Activated CD4-positive, alpha-beta T cell treated with anti-CD3 and anti-CD28 coated beads, Interleukin-2, amount 10 ng/mL, durations not matched to agents 7 days and 5 days (primary cell): ENCODE measurements at regions of chr21 and their contacts with region 1.

Region 1: DNA sequence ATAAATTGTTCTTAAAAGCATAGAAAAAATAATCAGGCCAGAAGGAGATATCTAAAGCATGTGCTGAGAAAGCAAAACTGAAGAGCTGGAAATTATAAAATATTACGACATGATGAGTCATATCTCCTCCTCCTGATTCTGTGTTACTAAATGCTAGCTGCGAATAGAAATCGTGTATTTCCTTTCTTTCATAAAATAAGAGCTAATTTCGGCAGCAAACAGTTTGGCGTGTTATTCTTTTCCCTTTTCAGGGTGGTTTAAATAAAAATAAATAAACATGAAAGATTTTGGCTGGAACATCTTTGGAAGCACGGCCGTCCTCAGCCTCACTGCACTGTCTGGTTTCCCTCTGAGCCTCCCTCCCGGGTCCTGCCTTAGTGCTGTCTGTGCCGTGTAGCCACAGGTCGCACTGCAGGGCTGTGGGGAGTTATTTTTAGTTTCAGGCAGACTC is 56.0 kb downstream of the ADARB1 start:
- DNase-seq: no peak
- H3K4me3 Mint-ChIP-seq: no peak overlapping the region
- H3K27ac Mint-ChIP-seq: no peak overlapping the region
- H3K4me1 Mint-ChIP-seq: peaks cover 23% of the 10 kb centered on the region
- H3K27me3 Mint-ChIP-seq: no peaks in the 10 kb centered on the region

Region 2: GRCh38 chr21:44949779-44950198 is 180.6 kb before region 1 on chr21:
- CTCF ChIA-PET with region 1: interaction called, 11 read pairs
- POLR2A ChIA-PET with region 1: no interaction called
- DNase-seq: peak; percentile 86
- H3K4me3 Mint-ChIP-seq: no peak overlapping the region
- H3K27ac Mint-ChIP-seq: no peak overlapping the region
- H3K4me1 Mint-ChIP-seq: peaks cover 11% of the 10 kb centered on the region
- H3K27me3 Mint-ChIP-seq: no peaks in the 10 kb centered on the region

Region 3: DNA sequence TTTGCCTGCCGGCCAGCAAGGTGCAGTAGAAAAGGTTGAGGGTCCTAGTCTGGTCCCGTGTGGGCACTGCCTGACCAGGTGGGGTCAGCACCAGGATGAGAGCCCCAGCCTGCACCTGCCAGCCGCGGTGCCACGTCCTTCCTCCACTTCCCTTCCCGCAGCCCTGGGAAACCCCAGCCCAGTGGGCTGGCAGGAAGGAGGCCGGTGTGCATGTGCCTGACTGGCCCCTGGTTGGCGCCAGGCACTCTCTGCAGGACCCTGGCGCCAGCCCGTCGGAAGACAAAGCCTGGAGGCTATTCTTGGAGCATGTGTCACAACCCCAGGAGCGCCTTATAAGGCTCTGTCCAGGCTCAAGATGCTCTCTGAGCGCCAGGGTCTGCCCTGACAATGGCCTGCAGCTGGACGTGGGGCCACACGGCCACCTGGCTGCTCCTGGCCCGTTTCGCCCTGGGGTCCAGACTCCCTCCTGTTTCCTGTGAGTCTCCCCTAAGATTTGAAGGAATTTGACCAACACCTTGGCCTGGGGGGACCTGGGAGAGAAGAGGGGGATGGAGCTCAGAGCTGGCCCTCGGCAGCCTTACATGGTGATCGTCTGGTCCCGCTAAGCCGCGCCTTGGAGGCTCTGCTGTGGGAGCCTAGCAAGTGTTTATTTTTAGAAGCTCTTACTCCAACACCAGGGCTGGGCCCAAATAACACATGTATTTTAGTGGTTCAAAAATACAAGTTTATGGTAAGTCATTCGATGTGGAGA is 189.3 kb after region 1 on chr21:
- CTCF ChIA-PET with region 1: no interaction called
- POLR2A ChIA-PET with region 1: no interaction called
- DNase-seq: no peak
- H3K4me3 Mint-ChIP-seq: no peak overlapping the region
- H3K27ac Mint-ChIP-seq: no peak overlapping the region
- H3K4me1 Mint-ChIP-seq: peaks cover 12% of the 10 kb centered on the region
- H3K27me3 Mint-ChIP-seq: peaks cover 14% of the 10 kb centered on the region